ENCODE measurements at regions of chr12 and their contacts with region 1.

Region 1: GRCh38 chr12:68958322-68958721 is 25.4 kb upstream of the CPM start:
- DNase-seq: peak; percentile 45
- H3K4me3 Mint-ChIP-seq: peak overlapping the region; percentile 21
- H3K27ac Mint-ChIP-seq: peak overlapping the region; percentile 86
- H3K4me1 Mint-ChIP-seq: peaks cover 52% of the 10 kb centered on the region
- H3K27me3 Mint-ChIP-seq: no peaks in the 10 kb centered on the region

Region 2: DNA sequence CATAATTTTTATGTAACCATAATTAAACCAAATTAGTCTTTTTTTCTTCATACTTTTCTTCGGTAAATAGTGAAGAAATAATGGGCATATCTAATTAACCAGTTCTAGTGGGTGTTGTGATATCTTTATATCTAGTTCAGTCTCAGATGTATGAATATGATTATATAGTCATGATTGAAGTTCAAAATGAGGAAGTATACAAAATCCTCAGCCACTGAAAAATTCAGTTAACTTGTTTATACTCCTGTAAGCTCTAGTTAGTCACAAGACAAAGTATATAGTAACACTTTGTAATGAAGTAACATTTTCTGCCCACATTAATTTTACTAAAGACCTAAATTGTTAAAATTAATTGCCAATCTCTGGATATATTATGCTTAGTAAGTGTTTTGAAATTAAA is 1642.7 kb before region 1 on chr12:
- intact Hi-C with region 1: no loop called
- DNase-seq: no peak
- H3K4me3 Mint-ChIP-seq: no peak overlapping the region
- H3K27ac Mint-ChIP-seq: no peak overlapping the region
- H3K4me1 Mint-ChIP-seq: peaks cover 8% of the 10 kb centered on the region
- H3K27me3 Mint-ChIP-seq: no peaks in the 10 kb centered on the region

Region 3: GRCh38 chr12:68821357-68822188 is 136.7 kb before region 1 on chr12:
- intact Hi-C with region 1: no loop called
- DNase-seq: no peak
- H3K4me3 Mint-ChIP-seq: no peak overlapping the region
- H3K27ac Mint-ChIP-seq: peak overlapping the region; percentile 37
- H3K4me1 Mint-ChIP-seq: peaks cover 51% of the 10 kb centered on the region
- H3K27me3 Mint-ChIP-seq: no peaks in the 10 kb centered on the region

Region 4: GRCh38 chr12:68889647-68890121 is 68.6 kb before region 1 on chr12:
- intact Hi-C with region 1: loop called (anchors 1 kb)
- DNase-seq: no peak
- H3K4me3 Mint-ChIP-seq: no peak overlapping the region
- H3K27ac Mint-ChIP-seq: no peak overlapping the region
- H3K4me1 Mint-ChIP-seq: peaks cover 45% of the 10 kb centered on the region
- H3K27me3 Mint-ChIP-seq: no peaks in the 10 kb centered on the region

Region 5: DNA sequence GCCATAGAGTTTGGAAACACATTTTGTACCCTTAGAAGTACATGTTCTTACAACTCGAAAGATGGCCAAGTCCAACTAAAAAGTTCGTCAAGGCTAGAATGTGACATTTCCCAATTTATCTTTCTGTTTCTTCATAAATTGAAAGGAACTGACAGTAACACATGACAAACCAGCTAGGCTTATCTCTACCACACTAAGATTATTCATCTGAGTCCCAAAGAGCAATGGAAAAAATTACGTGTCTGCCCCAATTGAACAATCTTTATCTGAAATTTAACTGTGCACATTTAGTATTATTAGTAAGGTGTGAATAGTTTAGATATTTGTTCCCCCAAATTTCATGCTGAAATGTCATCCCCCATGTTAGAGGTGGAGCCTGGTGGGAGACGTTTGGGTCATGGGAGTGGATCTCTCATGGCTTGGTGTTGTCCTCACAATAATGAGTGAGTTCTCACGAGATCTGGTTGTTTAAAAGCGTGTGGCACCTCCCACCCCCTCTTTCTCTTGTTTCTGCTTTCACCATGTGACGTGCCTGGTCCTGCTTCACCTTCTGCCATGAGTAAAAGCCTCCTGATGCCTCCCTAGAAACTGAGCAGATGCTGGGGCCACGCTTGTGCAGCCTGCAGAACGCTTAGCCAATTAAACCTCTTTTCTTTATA is 38.6 kb before region 1 on chr12:
- intact Hi-C with region 1: loop called (anchors 1 kb)
- DNase-seq: no peak
- H3K4me3 Mint-ChIP-seq: no peak overlapping the region
- H3K27ac Mint-ChIP-seq: no peak overlapping the region
- H3K4me1 Mint-ChIP-seq: peaks cover 30% of the 10 kb centered on the region
- H3K27me3 Mint-ChIP-seq: no peaks in the 10 kb centered on the region

Region 6: GRCh38 chr12:68943848-68944247 is 14.5 kb before region 1 on chr12:
- intact Hi-C with region 1: no loop called
- DNase-seq: no peak
- H3K4me3 Mint-ChIP-seq: no peak overlapping the region
- H3K27ac Mint-ChIP-seq: no peak overlapping the region
- H3K4me1 Mint-ChIP-seq: peaks cover 5% of the 10 kb centered on the region
- H3K27me3 Mint-ChIP-seq: no peaks in the 10 kb centered on the region

Region 7: GRCh38 chr12:69007101-69007854 is 49.0 kb after region 1 on chr12:
- intact Hi-C with region 1: loop called (anchors 2 kb)
- DNase-seq: no peak
- H3K4me3 Mint-ChIP-seq: no peak overlapping the region
- H3K27ac Mint-ChIP-seq: peak overlapping the region; percentile 21
- H3K4me1 Mint-ChIP-seq: peaks cover 14% of the 10 kb centered on the region
- H3K27me3 Mint-ChIP-seq: peaks cover 8% of the 10 kb centered on the region

Region 8: DNA sequence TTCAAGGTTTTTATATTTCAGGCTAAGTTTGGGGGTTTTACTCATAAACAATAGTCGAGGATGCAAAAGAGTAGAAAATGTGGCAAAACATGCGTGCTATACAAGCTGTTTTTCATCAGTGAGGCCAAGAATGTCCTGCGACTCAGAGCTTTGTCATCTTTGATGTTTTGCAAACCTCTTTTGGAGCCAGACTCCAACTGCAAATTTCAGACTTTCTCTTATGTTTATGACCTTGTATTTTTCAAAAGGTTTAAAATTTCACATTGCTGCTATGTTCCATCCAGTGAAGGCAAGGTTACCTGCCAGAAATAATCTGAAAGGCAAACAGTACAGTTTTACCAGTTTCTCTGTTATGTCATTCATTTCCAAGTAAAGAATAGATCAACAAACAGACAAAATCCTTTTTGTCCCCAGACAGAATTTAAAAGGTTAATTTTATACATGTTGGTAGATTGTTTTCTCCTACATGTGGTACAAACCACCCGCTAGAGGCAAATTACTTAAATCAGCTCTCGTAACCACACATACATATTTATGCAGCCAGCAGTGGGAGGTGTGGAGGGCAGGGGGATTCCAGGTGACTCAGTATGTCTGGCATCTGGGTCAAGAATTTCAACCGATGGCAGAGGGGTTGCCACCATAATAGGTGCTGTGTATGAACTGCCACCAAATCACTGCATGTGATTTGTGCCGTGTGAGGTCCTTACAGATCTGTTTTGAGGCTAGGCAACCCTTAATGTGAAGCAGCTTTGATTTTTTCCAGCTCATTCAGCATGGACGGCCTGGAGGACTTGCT is 94.5 kb after region 1 on chr12:
- intact Hi-C with region 1: loop called (anchors 1 kb)
- DNase-seq: peak; percentile 21
- H3K4me3 Mint-ChIP-seq: no peak overlapping the region
- H3K27ac Mint-ChIP-seq: peak overlapping the region; percentile 62
- H3K4me1 Mint-ChIP-seq: peaks cover 40% of the 10 kb centered on the region
- H3K27me3 Mint-ChIP-seq: no peaks in the 10 kb centered on the region